ENCODE measurements at regions of chr17 and their contacts with region 1.

Region 1: GRCh38 chr17:68019675-68020408 is 15.7 kb upstream of the KPNA2 start:
- DNase-seq: peak; percentile 97

Region 2: DNA sequence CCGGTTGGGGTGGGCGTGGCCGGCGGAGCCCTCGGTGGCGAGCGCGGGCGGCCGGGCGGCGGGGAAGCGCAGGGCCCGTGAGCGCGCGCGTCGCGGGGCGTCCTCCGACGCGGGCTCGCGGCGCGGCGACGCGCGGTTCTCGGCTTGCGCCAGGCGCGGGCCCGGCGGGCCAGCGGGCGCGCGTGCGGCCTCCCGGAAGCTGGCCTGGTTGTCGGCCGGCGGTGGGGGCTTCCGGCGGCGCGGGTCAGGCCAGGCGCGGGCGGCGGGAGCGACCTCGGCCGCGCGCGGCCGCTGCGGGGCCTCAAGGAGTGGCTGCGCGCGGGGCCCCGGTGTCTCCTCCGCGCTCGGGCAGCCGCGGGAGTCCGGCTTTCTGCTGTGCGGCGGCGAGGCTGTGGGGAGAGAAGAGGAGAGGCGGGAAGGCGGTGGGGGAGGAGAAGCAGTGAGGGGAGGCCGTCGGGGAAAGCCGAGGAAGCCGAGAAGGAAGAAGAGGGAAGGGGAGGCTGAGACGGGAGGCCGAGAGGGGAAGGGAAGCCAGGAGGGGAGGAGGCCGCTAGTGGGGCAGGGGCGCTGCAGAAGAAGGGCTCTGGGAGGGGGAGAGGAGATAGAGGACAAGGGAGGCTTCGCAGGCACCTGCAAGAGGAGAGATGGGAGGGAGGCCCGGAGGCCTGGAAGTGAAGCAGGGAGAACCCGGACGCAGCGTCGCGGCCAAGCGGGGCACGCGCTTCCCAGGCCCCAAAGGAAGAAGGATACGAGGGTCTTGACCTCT is 26.1 kb before region 1 on chr17:
- intact Hi-C with region 1: loop called (anchors 1 kb)
- DNase-seq: peak; percentile 90

Region 3: GRCh38 chr17:68102318-68102758 is 82.5 kb after region 1 on chr17:
- intact Hi-C with region 1: loop called (anchors 2 kb)
- DNase-seq: no peak

Measured in cardiac septum (tissue), 1 donor.